Calu3 (cell line): ENCODE measurements at regions of chr19 and their contacts with region 1.

Region 1: GRCh38 chr19:56090931-56091490 is 30.1 kb downstream of the ZNF787 start:
- DNase-seq: peak; percentile 40
- H3K4me3 Mint-ChIP-seq: peak overlapping the region; percentile 66
- H3K27ac Mint-ChIP-seq: peak overlapping the region; percentile 91
- H3K4me1 Mint-ChIP-seq: peaks cover 28% of the 10 kb centered on the region
- H3K27me3 Mint-ChIP-seq: no peaks in the 10 kb centered on the region
- CTCF ChIP-seq: no peak

Region 2: GRCh38 chr19:55930996-55931515 is 160.0 kb before region 1 on chr19:
- CTCF ChIA-PET with region 1: no interaction called
- intact Hi-C with region 1: no loop called
- DNase-seq: no peak
- H3K4me3 Mint-ChIP-seq: no peak overlapping the region
- H3K27ac Mint-ChIP-seq: no peak overlapping the region
- H3K4me1 Mint-ChIP-seq: no peaks in the 10 kb centered on the region
- H3K27me3 Mint-ChIP-seq: no peaks in the 10 kb centered on the region
- CTCF ChIP-seq: no peak

Region 3: DNA sequence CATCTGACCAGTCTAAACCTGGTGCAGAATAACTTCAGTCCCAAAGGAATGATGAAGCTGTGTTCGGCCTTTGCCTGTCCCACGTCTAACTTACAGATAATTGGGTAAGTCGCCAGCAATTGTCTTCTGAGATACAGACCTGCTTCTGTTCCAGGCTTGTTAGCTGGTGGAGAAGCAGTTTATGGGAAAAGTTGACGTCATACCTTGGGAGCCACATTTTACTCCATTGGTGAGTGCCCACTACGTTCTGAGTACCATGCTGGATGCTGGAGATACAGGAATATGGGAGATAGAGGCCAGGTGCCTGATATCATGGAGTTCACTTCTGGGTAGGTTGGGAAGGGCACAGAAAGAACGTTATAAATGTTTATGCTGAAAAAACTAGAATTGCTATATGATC is 32.7 kb before region 1 on chr19:
- CTCF ChIA-PET with region 1: no interaction called
- intact Hi-C with region 1: no loop called
- DNase-seq: no peak
- H3K4me3 Mint-ChIP-seq: no peak overlapping the region
- H3K27ac Mint-ChIP-seq: no peak overlapping the region
- H3K4me1 Mint-ChIP-seq: no peaks in the 10 kb centered on the region
- H3K27me3 Mint-ChIP-seq: peaks cover 49% of the 10 kb centered on the region
- CTCF ChIP-seq: no peak

Region 4: GRCh38 chr19:56121180-56122167 is 30.5 kb after region 1 on chr19 and contains the start of gene ZNF787:
- CTCF ChIA-PET with region 1: no interaction called
- intact Hi-C with region 1: loop called (anchors 1 kb)
- DNase-seq: peak; percentile 100
- H3K4me3 Mint-ChIP-seq: peak within 1 kb of the TSS; percentile 84
- H3K27ac Mint-ChIP-seq: peak within 1 kb of the TSS; percentile 85
- H3K4me1 Mint-ChIP-seq: peaks cover 12% of the 10 kb centered on the region
- H3K27me3 Mint-ChIP-seq: no peaks in the 10 kb centered on the region
- CTCF ChIP-seq: no peak
- total RNA-seq, gene ZNF787: 68.5 and 77.3 TPM in 2 replicates

Region 5: GRCh38 chr19:56140583-56141416 is 49.8 kb after region 1 on chr19 and contains the start of gene ZNF444:
- CTCF ChIA-PET with region 1: no interaction called
- intact Hi-C with region 1: loop called (anchors 5 kb)
- DNase-seq: peak; percentile 99
- H3K4me3 Mint-ChIP-seq: peak within 1 kb of the TSS; percentile 67
- H3K27ac Mint-ChIP-seq: peak within 1 kb of the TSS; percentile 89
- H3K4me1 Mint-ChIP-seq: peaks cover 50% of the 10 kb centered on the region
- H3K27me3 Mint-ChIP-seq: no peaks in the 10 kb centered on the region
- CTCF ChIP-seq: no peak
- total RNA-seq, gene ZNF444: 78.6 and 79.1 TPM in 2 replicates